Astrocyte of the cerebellum (primary cell): ENCODE measurements at regions of chrX and their contacts with region 1.

Region 1: DNA sequence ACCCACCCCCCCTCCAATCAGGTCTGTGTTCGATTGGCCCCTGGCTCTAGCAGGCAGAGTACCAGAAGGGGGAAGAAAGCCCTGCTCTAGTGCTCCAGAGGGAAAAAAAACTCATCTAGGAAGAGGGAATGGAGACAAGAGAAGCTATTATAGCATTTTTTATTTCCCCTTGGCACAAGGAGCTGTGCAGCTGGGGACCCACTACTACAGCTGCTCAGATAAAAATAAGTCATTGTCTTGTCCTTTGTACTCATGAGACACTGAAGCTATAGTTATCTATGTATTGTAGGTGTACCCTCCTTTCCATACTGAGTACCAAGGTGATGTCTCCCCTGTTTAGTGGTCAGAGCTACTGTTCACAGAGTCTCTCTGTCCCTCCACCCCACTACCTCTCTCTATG is 14.3 kb downstream of the CCDC160 start:
- DNase-seq: no peak
- H3K4me3 ChIP-seq: no peak overlapping the region
- CTCF ChIP-seq: no peak

Region 2: GRCh38 chrX:134194915-134195314 is 56.3 kb before region 1 on chrX:
- in situ Hi-C with region 1: no loop called
- DNase-seq: no peak
- H3K4me3 ChIP-seq: no peak overlapping the region
- CTCF ChIP-seq: no peak

Region 3: GRCh38 chrX:134287346-134287745 is 36.1 kb after region 1 on chrX:
- in situ Hi-C with region 1: loop called (anchors 5 kb)
- DNase-seq: no peak
- H3K4me3 ChIP-seq: no peak overlapping the region
- CTCF ChIP-seq: no peak